Psoas muscle (tissue), 8 donors: ENCODE measurements at regions of chr9 and their contacts with region 1.

Region 1: GRCh38 chr9:89179895-89180667 is 1.5 kb upstream of the SHC3 start:
- DNase-seq: peak; percentile 89 to 92
- ATAC-seq: peak; percentile 93 to 98 (median 96)
- H3K4me3 ChIP-seq: peak overlapping the region; percentile 66
- H3K27ac ChIP-seq: peak overlapping the region; percentile 59
- H3K4me1 ChIP-seq: peaks cover 17% of the 10 kb centered on the region
- H3K27me3 ChIP-seq: peaks cover 4 to 39% (median 17%) of the 10 kb centered on the region in 3 donors
- CTCF ChIP-seq: no peak

Region 2: DNA sequence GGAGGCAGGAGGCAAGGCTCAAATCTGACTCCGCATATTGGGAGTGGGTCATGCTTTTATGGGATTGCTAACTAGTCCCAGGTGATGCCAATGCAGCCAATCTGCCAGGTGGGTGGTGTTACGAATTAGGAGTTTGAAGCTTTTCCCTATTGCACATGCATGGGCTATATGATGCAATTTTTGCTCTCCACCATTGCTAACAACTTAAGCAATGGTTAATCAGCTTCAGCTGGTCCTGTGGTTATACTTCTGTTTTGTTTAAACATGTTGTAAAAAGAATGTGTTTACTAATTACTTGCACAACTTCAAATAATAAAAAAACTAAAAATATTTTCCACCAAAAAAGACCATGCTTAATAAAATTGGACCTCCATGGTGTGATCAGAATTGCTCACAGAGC is 57.1 kb before region 1 on chr9:
- intact Hi-C with region 1: no loop called
- DNase-seq: no peak
- ATAC-seq: no peak
- H3K4me3 ChIP-seq: no peak overlapping the region
- H3K27ac ChIP-seq: no peak overlapping the region
- H3K4me1 ChIP-seq: no peaks in the 10 kb centered on the region
- H3K27me3 ChIP-seq: no peaks in the 10 kb centered on the region
- CTCF ChIP-seq: no peak

Region 3: DNA sequence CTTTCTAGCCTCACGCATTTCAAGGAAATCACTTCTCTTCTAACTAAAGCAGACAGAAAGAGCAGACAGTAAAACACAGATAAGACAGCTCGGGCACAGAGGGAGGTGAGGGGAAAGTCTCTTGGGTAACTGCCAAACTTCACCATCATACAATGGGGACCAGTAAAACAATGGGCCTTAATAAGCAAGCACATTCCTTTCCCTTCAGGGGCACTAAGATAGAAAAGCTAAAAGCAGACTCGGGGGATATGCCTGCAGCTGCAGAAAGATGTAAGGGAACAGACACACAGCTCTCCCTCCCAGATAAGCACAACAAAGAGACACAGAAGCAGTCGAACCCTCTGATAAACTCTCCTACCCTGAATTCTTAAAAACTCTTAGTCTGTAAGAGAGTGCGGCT is 115.3 kb after region 1 on chr9:
- intact Hi-C with region 1: loop called in 1 of 2 experiments (anchors 10 kb)
- DNase-seq: no peak
- ATAC-seq: no peak
- H3K4me3 ChIP-seq: no peak overlapping the region
- H3K27ac ChIP-seq: no peak overlapping the region
- H3K4me1 ChIP-seq: no peaks in the 10 kb centered on the region
- H3K27me3 ChIP-seq: no peaks in the 10 kb centered on the region
- CTCF ChIP-seq: no peak